GM10248 (cell line): ENCODE measurements at regions of chr17 and their contacts with region 1.

Region 1: DNA sequence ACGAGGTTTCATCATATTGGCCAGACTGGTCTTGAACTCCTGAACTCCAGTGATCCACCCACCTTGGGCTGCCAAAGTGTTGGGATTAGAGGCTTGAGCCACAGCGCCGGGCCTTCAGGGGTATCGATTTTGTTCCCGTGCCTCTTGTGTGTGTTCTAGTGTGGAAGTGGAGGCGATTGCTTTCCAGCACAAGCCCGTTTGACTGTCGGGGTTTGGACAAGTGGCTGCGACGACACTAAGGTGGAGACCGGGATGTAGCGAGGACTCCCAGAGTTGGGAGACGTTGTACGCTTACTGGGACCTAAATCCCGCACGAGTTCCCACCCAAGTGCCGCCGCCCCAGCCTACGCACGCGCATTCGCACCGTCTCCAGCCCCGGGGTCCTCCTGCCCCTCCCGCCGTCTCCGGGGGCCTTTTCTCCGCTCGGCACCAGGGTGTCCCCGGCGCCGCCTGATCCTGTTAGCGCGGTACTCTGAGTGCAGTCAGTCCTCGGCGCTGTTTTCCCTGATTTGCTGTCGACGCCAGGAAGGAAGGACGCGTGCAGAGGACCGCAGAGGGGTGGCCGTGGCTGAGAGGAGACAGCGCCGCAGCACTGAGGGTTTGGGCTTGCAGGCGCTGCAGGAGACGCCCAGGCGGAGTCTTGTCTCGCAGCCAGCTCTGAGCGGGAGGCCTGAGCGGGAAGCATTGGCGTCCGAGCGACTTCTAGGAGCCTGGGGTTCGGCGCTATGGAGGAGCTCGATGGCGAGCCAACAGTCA is at the start of gene NUP85:
- DNase-seq: peak; percentile 99
- CTCF ChIP-seq: no peak

Region 2: GRCh38 chr17:74915180-74915579 is 290.0 kb before region 1 on chr17:
- CTCF ChIA-PET with region 1: no interaction called
- POLR2A ChIA-PET with region 1: no interaction called
- DNase-seq: no peak
- CTCF ChIP-seq: no peak

Region 3: GRCh38 chr17:75069783-75070182 is 135.4 kb before region 1 on chr17:
- CTCF ChIA-PET with region 1: interaction called, 10 read pairs
- POLR2A ChIA-PET with region 1: no interaction called
- DNase-seq: no peak
- CTCF ChIP-seq: peak; percentile 35

Region 4: GRCh38 chr17:75173526-75173925 is 31.7 kb before region 1 on chr17:
- CTCF ChIA-PET with region 1: interaction called, 19 read pairs
- POLR2A ChIA-PET with region 1: no interaction called
- DNase-seq: no peak
- CTCF ChIP-seq: no peak

Region 5: GRCh38 chr17:75219815-75220214 is 14.6 kb after region 1 on chr17:
- CTCF ChIA-PET with region 1: interaction called, 11 read pairs
- POLR2A ChIA-PET with region 1: no interaction called
- DNase-seq: no peak
- CTCF ChIP-seq: no peak

Region 6: GRCh38 chr17:75228305-75228704 is 23.1 kb after region 1 on chr17:
- CTCF ChIA-PET with region 1: interaction called, 16 read pairs
- POLR2A ChIA-PET with region 1: no interaction called
- DNase-seq: no peak
- CTCF ChIP-seq: no peak